Activated CD4-positive, alpha-beta memory T cell treated with anti-CD3 and anti-CD28 coated beads for 36 hours (primary cell): ENCODE measurements at regions of chr2 and their contacts with region 1.

Region 1: GRCh38 chr2:96760036-96760985 is at the start of gene CNNM4:
- DNase-seq: peak; percentile 95
- H3K4me3 Mint-ChIP-seq: peak within 1 kb of the TSS; percentile 79
- H3K27ac Mint-ChIP-seq: peak within 1 kb of the TSS; percentile 78
- H3K4me1 Mint-ChIP-seq: peaks cover 54% of the 10 kb centered on the region
- H3K27me3 Mint-ChIP-seq: no peaks in the 10 kb centered on the region
- total RNA-seq, gene CNNM4: 7.5 to 8.2 TPM

Region 2: GRCh38 chr2:96638144-96639121 is 121.9 kb before region 1 on chr2 and contains the start of gene KANSL3:
- CTCF ChIA-PET with region 1: interaction called, 10 read pairs
- POLR2A ChIA-PET with region 1: interaction called, 5 read pairs
- intact Hi-C with region 1: loop called (anchors 1 kb)
- DNase-seq: peak; percentile 93
- H3K4me3 Mint-ChIP-seq: peak within 1 kb of the TSS; percentile 97
- H3K27ac Mint-ChIP-seq: peak within 1 kb of the TSS; percentile 90
- H3K4me1 Mint-ChIP-seq: peaks cover 28% of the 10 kb centered on the region
- H3K27me3 Mint-ChIP-seq: no peaks in the 10 kb centered on the region
- total RNA-seq, gene KANSL3: 33.7 to 39.4 TPM

Region 3: DNA sequence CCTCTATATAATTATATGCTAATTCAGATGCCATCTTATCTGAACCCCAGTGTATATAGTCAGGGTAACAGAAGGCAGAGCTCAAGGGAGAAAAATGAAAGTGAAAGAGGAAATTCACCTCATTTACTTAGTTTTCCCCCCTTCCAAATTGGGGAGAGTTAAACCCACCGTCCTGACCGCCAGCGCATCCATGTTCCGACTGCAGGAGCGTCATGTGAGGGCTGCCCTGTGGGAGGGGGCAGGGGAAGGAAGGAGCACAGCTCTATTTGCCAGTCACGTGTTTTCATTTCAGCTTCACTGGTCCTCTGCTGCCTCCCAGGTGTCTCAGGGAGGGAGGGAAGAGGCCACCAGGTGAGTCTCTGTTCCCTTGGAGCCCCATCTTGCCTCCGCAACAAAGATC is 13.6 kb after region 1 on chr2:
- CTCF ChIA-PET with region 1: interaction called, 28 read pairs
- POLR2A ChIA-PET with region 1: interaction called, 5 read pairs
- intact Hi-C with region 1: no loop called
- DNase-seq: peak; percentile 65
- H3K4me3 Mint-ChIP-seq: peak overlapping the region; percentile 62
- H3K27ac Mint-ChIP-seq: no peak overlapping the region
- H3K4me1 Mint-ChIP-seq: peaks cover 18% of the 10 kb centered on the region
- H3K27me3 Mint-ChIP-seq: no peaks in the 10 kb centered on the region

Region 4: GRCh38 chr2:96801005-96801785 is 40.9 kb after region 1 on chr2:
- CTCF ChIA-PET with region 1: interaction called, 9 read pairs
- POLR2A ChIA-PET with region 1: no interaction called
- intact Hi-C with region 1: loop called (anchors 1 kb)
- DNase-seq: peak; percentile 86
- H3K4me3 Mint-ChIP-seq: no peak overlapping the region
- H3K27ac Mint-ChIP-seq: no peak overlapping the region
- H3K4me1 Mint-ChIP-seq: peaks cover 4% of the 10 kb centered on the region
- H3K27me3 Mint-ChIP-seq: no peaks in the 10 kb centered on the region